ENCODE measurements at regions of chr3 and their contacts with region 1.

Region 1: DNA sequence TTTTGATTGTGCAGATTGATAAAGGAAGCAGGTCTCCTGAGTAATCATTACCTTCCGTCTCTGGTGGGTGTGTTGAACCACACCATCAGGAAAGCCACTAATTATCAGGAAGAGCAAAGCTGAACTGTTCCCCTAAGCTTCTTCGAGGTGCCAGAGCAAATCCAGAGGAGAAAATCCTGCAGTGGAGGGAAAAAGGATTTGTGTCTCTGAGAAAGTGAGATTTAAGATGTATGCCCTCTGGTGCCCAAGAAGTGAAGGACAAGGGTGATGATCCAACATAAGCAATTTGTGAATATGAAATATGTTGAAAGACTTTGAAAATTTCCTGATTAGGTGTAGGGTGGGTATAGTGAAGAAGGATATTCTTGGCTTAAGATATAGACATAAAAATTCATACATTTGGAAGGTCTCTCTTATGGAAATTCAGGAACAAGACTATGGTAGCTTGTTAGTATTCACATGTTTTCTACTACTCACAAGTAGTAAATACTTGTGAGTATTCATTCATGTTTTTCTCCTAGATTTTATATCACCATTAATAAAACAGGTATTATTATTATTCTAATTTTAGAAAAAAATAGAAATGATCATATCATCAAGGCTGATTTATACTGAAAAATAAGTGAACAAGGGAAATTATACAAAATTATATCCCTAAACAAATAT is 34.8 kb downstream of the COMMD2 start:
- DNase-seq: peak in 1 of 2 donors; percentile 47
- ATAC-seq: peak; percentile 62
- H3K4me3 ChIP-seq: no peak overlapping the region
- H3K27ac ChIP-seq: no peak overlapping the region
- H3K4me1 ChIP-seq: no peaks in the 10 kb centered on the region
- H3K27me3 ChIP-seq: no peaks in the 10 kb centered on the region

Region 2: GRCh38 chr3:149512209-149512782 is 205.2 kb before region 1 on chr3:
- intact Hi-C with region 1: loop called (anchors 2 to 5 kb)
- DNase-seq: peak in 1 of 2 donors; percentile 67
- ATAC-seq: peak; percentile 85
- H3K4me3 ChIP-seq: no peak overlapping the region
- H3K27ac ChIP-seq: no peak overlapping the region
- H3K4me1 ChIP-seq: peaks cover 0 to 6% of the 10 kb centered on the region in 2 donors
- H3K27me3 ChIP-seq: no peaks in the 10 kb centered on the region

Region 3: GRCh38 chr3:149534671-149535332 is 182.7 kb before region 1 on chr3:
- intact Hi-C with region 1: loop called (anchors 5 kb)
- DNase-seq: no peak
- ATAC-seq: no peak
- H3K4me3 ChIP-seq: no peak overlapping the region
- H3K27ac ChIP-seq: peak overlapping the region in 1 of 2 donors; percentile 32
- H3K4me1 ChIP-seq: peaks cover 12 to 23% of the 10 kb centered on the region in 2 donors
- H3K27me3 ChIP-seq: no peaks in the 10 kb centered on the region

Region 4: GRCh38 chr3:149572796-149573414 is 144.6 kb before region 1 on chr3:
- intact Hi-C with region 1: loop called in 1 of 2 experiments (anchors 5 kb)
- DNase-seq: peak in 1 of 2 donors; percentile 68
- ATAC-seq: peak; percentile 73
- H3K4me3 ChIP-seq: no peak overlapping the region
- H3K27ac ChIP-seq: peak overlapping the region in 1 of 2 donors; percentile 28
- H3K4me1 ChIP-seq: peaks cover 9 to 13% of the 10 kb centered on the region in 2 donors
- H3K27me3 ChIP-seq: no peaks in the 10 kb centered on the region

Region 5: DNA sequence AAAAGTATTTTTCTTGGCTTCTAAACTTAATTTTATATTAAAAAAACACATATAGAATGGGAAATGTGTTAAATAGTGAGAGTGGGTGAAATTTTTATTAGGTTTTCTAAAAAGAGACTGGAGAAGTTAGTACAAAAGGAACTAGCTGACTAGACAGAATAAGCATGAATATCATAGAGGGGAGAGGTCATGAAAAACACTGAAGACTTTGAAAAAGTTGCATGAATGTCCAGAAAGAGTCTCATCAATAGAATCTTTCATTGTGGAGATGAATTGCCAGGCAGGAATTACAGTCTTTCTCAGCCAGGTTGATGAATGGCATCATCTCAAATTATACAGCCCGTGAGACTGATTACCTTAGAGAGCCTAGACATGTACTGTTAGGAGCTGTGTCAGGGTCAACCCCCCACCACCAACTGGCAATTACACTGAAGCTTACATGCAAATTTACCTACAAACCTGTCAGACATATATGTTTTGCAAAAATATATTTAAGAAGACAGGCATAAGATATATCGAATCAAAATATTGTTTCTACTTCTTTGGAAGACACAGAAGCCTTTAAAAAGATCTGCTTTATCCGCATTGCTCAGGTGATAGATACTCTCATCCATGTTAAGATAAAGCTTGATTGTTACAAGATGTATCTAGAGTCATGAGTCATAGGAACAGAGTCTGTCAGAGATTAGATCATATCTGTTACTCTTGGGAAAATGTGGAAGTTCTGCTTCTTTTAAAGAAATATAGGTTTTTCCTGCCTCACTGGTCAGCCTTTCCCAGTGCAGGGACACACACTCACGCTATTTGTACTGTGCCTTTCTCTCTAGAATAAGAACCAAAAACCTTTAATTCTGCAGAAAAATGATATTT is 288.0 kb after region 1 on chr3:
- intact Hi-C with region 1: no loop called
- DNase-seq: no peak
- ATAC-seq: no peak
- H3K4me3 ChIP-seq: no peak overlapping the region
- H3K27ac ChIP-seq: no peak overlapping the region
- H3K4me1 ChIP-seq: no peaks in the 10 kb centered on the region
- H3K27me3 ChIP-seq: no peaks in the 10 kb centered on the region

Measured in aorta (tissue), 5 donors.